ENCODE measurements at regions of chr5 and their contacts with region 1.

Region 1: GRCh38 chr5:39217365-39218281 is 1.7 kb downstream of the FYB1 start:
- DNase-seq: peak; percentile 75
- ATAC-seq: peak; percentile 85
- H3K4me3 ChIP-seq: peak overlapping the region in 1 of 5 experiments; percentile 65
- H3K4me3 Mint-ChIP-seq: no peak overlapping the region
- H3K27ac ChIP-seq: no peak overlapping the region
- H3K27ac Mint-ChIP-seq: no peak overlapping the region
- H3K4me1 ChIP-seq: no peaks in the 10 kb centered on the region
- H3K4me1 Mint-ChIP-seq: no peaks in the 10 kb centered on the region
- H3K27me3 ChIP-seq: no peaks in the 10 kb centered on the region
- H3K27me3 Mint-ChIP-seq: peaks cover 10% of the 10 kb centered on the region
- CTCF ChIP-seq: peak; percentile 96

Region 2: GRCh38 chr5:39201160-39201780 is 16.4 kb before region 1 on chr5:
- CTCF ChIA-PET with region 1: interaction called, 13 read pairs
- POLR2A ChIA-PET with region 1: no interaction called
- intact Hi-C with region 1: no loop called
- DNase-seq: no peak
- ATAC-seq: no peak
- H3K4me3 ChIP-seq: peak overlapping the region in 1 of 5 experiments; percentile 42
- H3K4me3 Mint-ChIP-seq: no peak overlapping the region
- H3K27ac ChIP-seq: no peak overlapping the region
- H3K27ac Mint-ChIP-seq: peak overlapping the region; percentile 23
- H3K4me1 ChIP-seq: peaks cover 12 to 13% of the 10 kb centered on the region in 2 donors
- H3K4me1 Mint-ChIP-seq: peaks cover 20% of the 10 kb centered on the region
- H3K27me3 ChIP-seq: no peaks in the 10 kb centered on the region
- H3K27me3 Mint-ChIP-seq: peaks cover 4% of the 10 kb centered on the region
- CTCF ChIP-seq: no peak

Region 3: DNA sequence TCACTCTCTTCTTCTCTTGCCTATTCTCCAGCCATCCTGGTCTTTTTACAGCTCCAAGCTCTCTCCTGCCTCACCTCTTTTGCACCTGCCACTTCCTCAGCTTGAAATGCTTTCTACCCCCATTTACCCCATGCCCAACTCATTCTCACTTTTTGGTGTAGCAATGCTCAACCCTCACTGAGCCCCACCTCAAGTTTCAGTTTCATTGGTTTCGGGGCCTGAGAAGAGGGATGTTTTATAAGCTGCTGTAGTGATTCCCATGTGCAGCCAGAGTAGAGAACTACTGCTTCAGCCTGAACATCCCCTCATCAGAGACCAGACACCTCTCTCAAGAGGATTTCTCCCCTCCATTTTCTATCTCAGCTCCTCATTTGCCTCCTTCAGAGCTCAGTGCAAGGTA is 46.9 kb after region 1 on chr5:
- CTCF ChIA-PET with region 1: interaction called, 14 read pairs
- POLR2A ChIA-PET with region 1: no interaction called
- intact Hi-C with region 1: no loop called
- DNase-seq: no peak
- ATAC-seq: no peak
- H3K4me3 ChIP-seq: no peak overlapping the region
- H3K4me3 Mint-ChIP-seq: no peak overlapping the region
- H3K27ac ChIP-seq: no peak overlapping the region
- H3K27ac Mint-ChIP-seq: no peak overlapping the region
- H3K4me1 ChIP-seq: peaks cover 0 to 4% of the 10 kb centered on the region in 2 donors
- H3K4me1 Mint-ChIP-seq: peaks cover 5% of the 10 kb centered on the region
- H3K27me3 ChIP-seq: no peaks in the 10 kb centered on the region
- H3K27me3 Mint-ChIP-seq: no peaks in the 10 kb centered on the region
- CTCF ChIP-seq: no peak

Region 4: GRCh38 chr5:39283231-39283818 is 65.7 kb after region 1 on chr5:
- CTCF ChIA-PET with region 1: interaction called, 173 read pairs
- POLR2A ChIA-PET with region 1: no interaction called
- intact Hi-C with region 1: loop called (anchors 1 kb)
- DNase-seq: peak; percentile 77
- ATAC-seq: peak; percentile 64
- H3K4me3 ChIP-seq: no peak overlapping the region
- H3K4me3 Mint-ChIP-seq: no peak overlapping the region
- H3K27ac ChIP-seq: no peak overlapping the region
- H3K27ac Mint-ChIP-seq: no peak overlapping the region
- H3K4me1 ChIP-seq: no peaks in the 10 kb centered on the region
- H3K4me1 Mint-ChIP-seq: no peaks in the 10 kb centered on the region
- H3K27me3 ChIP-seq: peaks cover 0 to 12% (median 0%) of the 10 kb centered on the region in 4 experiments
- H3K27me3 Mint-ChIP-seq: peaks cover 28% of the 10 kb centered on the region
- CTCF ChIP-seq: peak; percentile 80

Region 5: DNA sequence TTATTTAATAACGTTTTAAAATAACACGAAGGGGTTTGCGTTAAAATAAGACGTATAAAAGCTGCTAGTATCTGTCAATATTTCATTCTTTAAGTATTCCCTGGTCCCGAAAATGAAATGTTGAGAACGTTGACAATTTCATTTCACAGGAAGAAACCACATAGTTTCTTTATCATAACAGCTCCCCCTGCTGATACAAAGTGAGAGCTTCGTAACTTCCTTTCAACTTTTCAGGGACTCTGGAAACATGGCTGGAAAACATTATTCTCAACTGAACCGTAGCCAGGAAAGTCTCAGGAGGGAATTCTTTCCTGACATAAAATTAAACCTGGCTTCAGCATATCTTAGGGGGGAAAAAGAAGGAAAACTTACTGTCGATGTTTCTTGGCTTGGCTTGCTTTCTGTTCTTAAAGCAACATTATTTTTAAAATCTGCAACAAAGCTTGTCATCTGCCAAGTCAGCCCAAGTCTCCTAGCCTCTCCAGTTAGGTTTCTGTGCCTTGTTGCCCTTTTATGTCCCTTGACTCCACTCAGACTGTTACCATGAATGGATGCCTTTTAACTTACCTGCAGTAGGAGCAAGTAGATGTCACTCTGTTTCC is 330.0 kb after region 1 on chr5:
- CTCF ChIA-PET with region 1: interaction called, 52 read pairs
- POLR2A ChIA-PET with region 1: no interaction called
- intact Hi-C with region 1: loop called (anchors 1 kb)
- DNase-seq: peak; percentile 47
- ATAC-seq: no peak
- H3K4me3 ChIP-seq: no peak overlapping the region
- H3K4me3 Mint-ChIP-seq: no peak overlapping the region
- H3K27ac ChIP-seq: no peak overlapping the region
- H3K27ac Mint-ChIP-seq: no peak overlapping the region
- H3K4me1 ChIP-seq: peaks cover 2 to 3% of the 10 kb centered on the region in 2 donors
- H3K4me1 Mint-ChIP-seq: peaks cover 1% of the 10 kb centered on the region
- H3K27me3 ChIP-seq: peaks cover 0 to 8% (median under 1%) of the 10 kb centered on the region in 4 experiments
- H3K27me3 Mint-ChIP-seq: peaks cover 19% of the 10 kb centered on the region
- CTCF ChIP-seq: peak; percentile 74